ENCODE measurements at regions of chr17 and their contacts with region 1.

Region 1: DNA sequence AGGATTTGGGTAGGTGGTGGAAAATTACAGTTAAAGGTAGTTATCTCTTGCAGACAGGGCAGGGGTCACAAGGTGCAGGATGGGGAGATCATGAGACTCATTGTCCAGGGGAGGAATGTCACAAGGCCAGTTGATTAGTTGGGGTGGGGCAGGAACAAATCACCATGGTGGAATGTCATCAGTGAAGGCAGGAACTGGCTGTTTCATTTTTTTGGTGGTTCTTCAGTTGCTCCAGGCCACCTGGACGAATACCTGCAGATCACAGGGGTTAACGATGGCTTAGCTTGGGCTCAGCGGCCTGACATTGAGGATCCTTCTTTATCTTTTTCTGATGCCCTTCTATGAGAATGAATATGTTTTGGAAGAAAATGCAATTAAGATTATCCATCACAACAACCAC is 87.1 kb downstream of the KPNA2 start:
- DNase-seq: no peak
- H3K4me3 ChIP-seq: no peak overlapping the region
- CTCF ChIP-seq: no peak
- POLR2A ChIP-seq: no peak

Region 2: DNA sequence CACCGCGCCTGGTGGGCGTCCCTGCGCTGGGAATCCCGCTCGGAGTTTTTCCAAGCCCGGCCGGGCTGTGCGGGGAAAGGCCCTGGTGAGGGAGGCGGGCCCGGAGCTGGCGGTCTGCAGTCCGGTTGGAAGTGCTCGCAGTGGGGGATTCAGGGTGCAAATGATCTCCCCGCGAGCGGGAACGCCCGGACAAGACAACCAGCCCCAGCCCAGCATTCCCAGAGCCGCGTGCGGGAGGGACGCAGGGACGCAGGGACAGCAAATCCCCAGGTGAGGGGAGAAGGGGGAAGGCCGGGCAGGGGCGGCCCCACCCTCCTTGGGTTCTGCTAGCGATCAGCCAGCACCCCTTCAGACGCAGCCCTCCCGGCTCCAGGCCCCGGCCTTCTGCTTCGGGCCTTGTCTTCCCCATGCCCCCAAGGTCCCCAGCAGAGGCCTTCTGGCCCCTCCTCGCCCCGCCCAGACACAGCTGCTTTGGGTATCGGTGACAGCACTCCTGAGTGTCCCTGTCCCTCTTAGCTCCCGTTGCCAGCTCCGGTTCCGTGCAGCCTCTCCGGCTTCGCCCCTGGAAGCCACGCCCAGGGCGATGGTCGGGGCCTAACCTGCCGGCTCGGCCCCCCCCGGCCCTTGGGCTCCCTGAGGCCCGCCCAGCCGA is 74.5 kb after region 1 on chr17:
- intact Hi-C with region 1: loop called (anchors 2 kb)
- DNase-seq: no peak
- H3K4me3 ChIP-seq: peak overlapping the region; percentile 20
- CTCF ChIP-seq: no peak
- POLR2A ChIP-seq: no peak